Transverse colon (tissue), 4 donors: ENCODE measurements at regions of chr1 and their contacts with region 1.

Region 1: DNA sequence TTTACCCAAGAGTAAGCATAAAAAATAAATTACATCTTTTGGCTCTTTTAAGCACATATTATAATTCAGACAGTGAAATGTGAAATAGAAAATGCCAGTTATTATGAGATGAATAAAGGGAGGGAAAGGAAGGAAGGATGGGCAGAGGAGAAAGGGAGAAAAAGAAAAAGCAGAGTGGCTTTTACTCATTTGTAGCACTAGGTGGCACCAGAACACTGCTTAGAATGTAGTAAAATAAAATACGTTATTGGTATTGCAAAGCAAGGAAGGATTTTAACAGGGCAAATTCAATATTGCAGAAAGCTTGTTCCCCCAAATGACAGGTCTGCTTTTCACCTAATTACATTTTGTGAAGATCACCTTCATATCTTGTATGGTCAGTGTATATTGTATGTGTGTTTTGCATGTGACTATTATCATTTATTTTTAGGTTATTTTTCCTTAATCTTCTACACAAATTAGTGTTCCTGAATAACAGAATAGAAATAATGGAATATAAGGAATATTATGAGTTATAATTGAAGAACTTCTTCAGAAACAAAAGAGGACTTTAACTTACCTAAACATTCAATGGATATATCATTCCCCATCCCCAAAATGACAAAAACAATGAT is 9.1 kb upstream of the PCNX2 start:
- DNase-seq: no peak
- H3K4me3 ChIP-seq: no peak overlapping the region
- H3K27ac ChIP-seq: no peak overlapping the region
- H3K4me1 ChIP-seq: no peaks in the 10 kb centered on the region
- H3K27me3 ChIP-seq: peaks cover 7% of the 10 kb centered on the region
- CTCF ChIP-seq: peak; percentile 68 to 77 (median 73)
- EP300 ChIP-seq: no peak
- POLR2A ChIP-seq: no peak

Region 2: DNA sequence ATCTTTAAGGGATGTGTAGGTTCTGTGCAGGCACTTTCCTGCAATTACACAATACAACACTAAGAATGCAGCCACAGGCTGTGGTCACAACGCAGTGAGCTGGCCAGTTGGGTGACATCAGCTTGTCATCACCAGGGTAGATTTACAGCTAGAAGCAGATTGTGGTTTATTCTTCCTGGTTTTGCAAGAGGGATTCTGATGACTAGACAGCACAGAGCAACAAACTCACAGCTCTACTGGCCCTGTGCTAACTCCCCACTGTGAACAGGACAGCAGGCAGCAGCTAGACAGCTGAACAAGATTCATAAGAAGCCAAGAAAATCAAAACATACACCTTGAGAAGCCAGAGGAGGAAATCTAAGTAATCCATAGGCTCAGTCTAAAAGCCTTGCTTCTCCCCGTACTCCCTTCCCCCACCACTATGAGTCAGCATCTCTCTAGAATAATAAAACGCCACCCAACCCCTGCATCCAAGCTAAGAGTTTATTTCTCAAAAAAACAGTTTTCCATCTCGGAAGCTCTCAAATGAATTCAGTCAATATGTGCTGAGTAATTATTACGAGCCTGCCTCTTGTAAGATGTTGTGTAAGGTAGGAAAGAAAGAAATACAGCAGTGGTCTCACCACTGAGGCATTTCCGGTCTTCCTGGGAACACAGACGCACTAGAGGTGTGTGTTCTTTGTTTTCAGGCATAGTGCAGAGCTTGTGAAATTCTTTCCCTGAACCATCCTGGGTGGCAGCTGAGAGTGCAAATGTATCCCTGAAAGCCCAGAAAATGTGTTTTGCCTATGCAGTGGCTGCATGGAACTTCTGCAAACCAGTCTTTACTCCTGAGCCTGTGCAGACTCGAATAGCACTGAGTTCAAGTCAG is 191.4 kb before region 1 on chr1:
- in situ Hi-C with region 1: no loop called
- intact Hi-C with region 1: no loop called
- DNase-seq: peak; percentile 55
- H3K4me3 ChIP-seq: no peak overlapping the region
- H3K27ac ChIP-seq: peak overlapping the region; percentile 58 to 65 (median 64)
- H3K4me1 ChIP-seq: peaks cover 0 to 12% (median 0%) of the 10 kb centered on the region in 4 donors
- H3K27me3 ChIP-seq: no peaks in the 10 kb centered on the region
- CTCF ChIP-seq: no peak
- EP300 ChIP-seq: peak; percentile 34
- POLR2A ChIP-seq: no peak

Region 3: GRCh38 chr1:233197940-233198339 is 106.7 kb before region 1 on chr1:
- in situ Hi-C with region 1: no loop called
- intact Hi-C with region 1: no loop called
- DNase-seq: no peak
- H3K4me3 ChIP-seq: no peak overlapping the region
- H3K27ac ChIP-seq: no peak overlapping the region
- H3K4me1 ChIP-seq: no peaks in the 10 kb centered on the region
- H3K27me3 ChIP-seq: no peaks in the 10 kb centered on the region
- CTCF ChIP-seq: no peak
- EP300 ChIP-seq: no peak
- POLR2A ChIP-seq: no peak

Region 4: DNA sequence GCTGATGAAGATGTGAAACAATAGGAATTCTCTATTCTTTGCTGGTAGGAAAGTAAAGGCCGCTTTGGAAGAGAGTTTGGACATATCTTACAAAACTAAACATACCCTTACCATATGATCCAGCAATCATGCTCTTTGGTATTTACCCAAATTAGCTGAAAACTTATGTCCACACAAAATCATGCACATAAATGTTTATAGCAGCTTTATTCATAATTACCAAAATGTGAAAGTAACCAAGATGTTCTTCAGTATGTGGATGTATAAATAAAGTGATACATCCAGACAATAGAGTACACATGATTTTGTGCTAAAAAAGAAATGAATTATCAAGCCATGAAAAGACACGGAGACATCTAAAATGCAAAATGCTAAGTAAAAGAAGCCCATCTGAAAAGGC is 501.2 kb after region 1 on chr1:
- in situ Hi-C with region 1: loop called in 1 of 4 experiments (anchors 10 kb)
- intact Hi-C with region 1: no loop called
- DNase-seq: no peak
- H3K4me3 ChIP-seq: no peak overlapping the region
- H3K27ac ChIP-seq: no peak overlapping the region
- H3K4me1 ChIP-seq: no peaks in the 10 kb centered on the region
- H3K27me3 ChIP-seq: no peaks in the 10 kb centered on the region
- CTCF ChIP-seq: no peak
- EP300 ChIP-seq: no peak
- POLR2A ChIP-seq: no peak